MCF 10A (cell line): ENCODE measurements at regions of chr1 and their contacts with region 1.

Region 1: GRCh38 chr1:7454052-7454815 is 316.9 kb upstream of the VAMP3 start:
- DNase-seq: no peak
- H3K4me3 Mint-ChIP-seq: no peak overlapping the region
- H3K27ac Mint-ChIP-seq: peak overlapping the region; percentile 70
- H3K4me1 Mint-ChIP-seq: no peaks in the 10 kb centered on the region
- H3K27me3 Mint-ChIP-seq: no peaks in the 10 kb centered on the region
- CTCF ChIP-seq: peak; percentile 20

Region 2: GRCh38 chr1:7373876-7374562 is 80.2 kb before region 1 on chr1:
- CTCF ChIA-PET with region 1: no interaction called
- POLR2A ChIA-PET with region 1: no interaction called
- intact Hi-C with region 1: no loop called
- DNase-seq: no peak
- H3K4me3 Mint-ChIP-seq: no peak overlapping the region
- H3K27ac Mint-ChIP-seq: no peak overlapping the region
- H3K4me1 Mint-ChIP-seq: peaks cover 2% of the 10 kb centered on the region
- H3K27me3 Mint-ChIP-seq: no peaks in the 10 kb centered on the region
- CTCF ChIP-seq: no peak

Region 3: GRCh38 chr1:7470880-7471638 is 16.8 kb after region 1 on chr1:
- CTCF ChIA-PET with region 1: interaction called, 3 read pairs
- POLR2A ChIA-PET with region 1: interaction called, 11 read pairs
- intact Hi-C with region 1: no loop called
- DNase-seq: peak; percentile 99
- H3K4me3 Mint-ChIP-seq: no peak overlapping the region
- H3K27ac Mint-ChIP-seq: peak overlapping the region; percentile 96
- H3K4me1 Mint-ChIP-seq: peaks cover 31% of the 10 kb centered on the region
- H3K27me3 Mint-ChIP-seq: no peaks in the 10 kb centered on the region
- CTCF ChIP-seq: no peak

Region 4: DNA sequence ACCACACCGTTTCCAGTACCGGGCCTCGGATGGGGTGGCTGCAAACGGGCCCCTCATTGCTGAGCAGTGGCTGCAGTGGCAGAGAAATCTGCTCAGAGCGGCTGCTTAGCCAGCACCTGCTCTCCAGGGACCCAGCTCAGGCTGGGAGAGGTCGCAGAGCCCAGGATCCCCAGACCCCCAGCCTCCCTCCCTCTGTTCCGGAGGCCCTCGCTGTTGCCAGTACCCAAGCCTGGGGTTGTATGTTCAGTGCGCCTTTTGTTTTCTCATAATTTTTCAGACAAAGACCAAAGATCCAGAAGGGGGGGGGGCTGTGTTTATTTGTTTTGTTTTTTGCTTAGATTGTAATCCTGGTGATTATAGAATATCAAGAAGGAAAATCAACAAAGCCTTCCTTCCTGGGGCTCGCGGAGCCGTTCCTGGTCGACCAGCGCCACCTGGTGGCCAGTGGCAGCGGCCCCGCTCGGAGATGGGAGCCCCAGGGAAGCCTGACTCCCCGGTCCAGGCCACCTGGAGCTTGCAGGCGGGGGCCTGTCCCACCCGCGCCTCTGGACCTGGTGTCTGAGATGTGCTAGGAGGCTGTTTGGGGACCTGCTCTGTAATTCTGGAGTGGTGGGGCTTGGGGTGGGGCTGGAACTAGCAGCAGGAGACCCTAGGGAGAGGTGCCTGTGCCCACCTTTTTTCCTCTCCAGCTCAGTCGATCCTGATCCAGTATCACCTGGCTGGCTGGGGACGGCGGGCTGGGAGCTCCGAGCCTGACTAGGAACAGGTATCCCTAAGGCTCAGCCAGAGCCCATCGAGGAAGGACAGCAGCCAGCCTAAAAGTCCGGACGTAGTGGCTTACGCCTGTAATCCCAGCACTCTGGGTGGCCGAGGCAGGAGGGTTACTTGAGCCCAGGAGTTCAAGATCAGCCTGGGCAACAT is 193.0 kb after region 1 on chr1:
- CTCF ChIA-PET with region 1: no interaction called
- POLR2A ChIA-PET with region 1: no interaction called
- intact Hi-C with region 1: loop called (anchors 1 kb)
- DNase-seq: peak; percentile 61
- H3K4me3 Mint-ChIP-seq: no peak overlapping the region
- H3K27ac Mint-ChIP-seq: no peak overlapping the region
- H3K4me1 Mint-ChIP-seq: no peaks in the 10 kb centered on the region
- H3K27me3 Mint-ChIP-seq: peaks cover 9% of the 10 kb centered on the region
- CTCF ChIP-seq: peak; percentile 96

Region 5: GRCh38 chr1:8121261-8122170 is 667.3 kb after region 1 on chr1:
- CTCF ChIA-PET with region 1: no interaction called
- POLR2A ChIA-PET with region 1: no interaction called
- intact Hi-C with region 1: no loop called
- DNase-seq: peak; percentile 93
- H3K4me3 Mint-ChIP-seq: peak overlapping the region; percentile 35
- H3K27ac Mint-ChIP-seq: peak overlapping the region; percentile 92
- H3K4me1 Mint-ChIP-seq: peaks cover 31% of the 10 kb centered on the region
- H3K27me3 Mint-ChIP-seq: no peaks in the 10 kb centered on the region
- CTCF ChIP-seq: no peak